K562 (cell line): ENCODE measurements at regions of chr2 and their contacts with region 1.

Region 1: DNA sequence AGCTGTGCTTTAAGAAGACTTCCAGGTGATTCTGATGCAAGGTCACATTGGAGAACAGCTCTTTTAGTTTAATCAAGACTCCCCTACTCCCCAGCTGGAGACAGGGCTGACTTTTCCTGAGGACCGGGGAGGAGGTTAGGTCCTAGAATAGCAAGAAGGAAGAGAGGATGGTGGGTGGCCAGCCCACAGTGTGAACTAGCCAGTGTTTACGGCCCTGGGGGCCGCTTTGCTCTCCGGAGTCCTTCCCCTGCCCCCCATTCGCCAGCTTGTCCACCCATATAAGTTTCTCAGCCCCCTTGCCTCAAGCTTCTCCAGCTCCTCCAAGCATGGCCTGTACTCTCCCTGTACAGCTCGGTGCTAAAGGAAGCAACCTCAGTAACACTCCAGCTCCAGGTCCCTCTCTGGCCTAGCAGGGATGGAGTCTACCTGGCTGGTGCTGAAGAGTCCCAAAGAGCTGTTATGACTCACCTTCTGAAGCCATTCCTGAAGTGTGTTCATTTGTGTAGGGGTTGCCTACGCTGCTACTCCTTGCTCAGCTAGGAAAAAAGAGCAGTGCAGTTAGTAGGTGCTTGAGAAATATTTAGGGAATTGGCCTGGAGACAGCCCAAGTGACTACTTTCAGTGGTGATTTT is 7.9 kb downstream of the INPP4A start:
- DNase-seq: no peak
- ATAC-seq: no peak
- H3K4me3 ChIP-seq: no peak overlapping the region
- H3K27ac ChIP-seq: no peak overlapping the region
- H3K4me1 ChIP-seq: peaks cover 3 to 28% of the 10 kb centered on the region in 2 experiments; a peak in 3 of 5 replicates
- H3K27me3 ChIP-seq: no peaks in the 10 kb centered on the region
- CTCF ChIP-seq: no peak
- EP300 ChIP-seq: no peak
- POLR2A ChIP-seq: no peak
- RAD21 ChIP-seq: no peak

Region 2: GRCh38 chr2:98465456-98466226 is 13.1 kb after region 1 on chr2:
- CTCF ChIA-PET with region 1: no interaction called
- POLR2A ChIA-PET with region 1: interaction called, 10 read pairs
- in situ Hi-C with region 1: no loop called
- intact Hi-C with region 1: no loop called
- DNase-seq: peak; percentile 47 to 86 (median 64)
- ATAC-seq: peak; percentile 86
- H3K4me3 ChIP-seq: no peak overlapping the region
- H3K27ac ChIP-seq: peak overlapping the region; percentile 23
- H3K4me1 ChIP-seq: peaks cover 37 to 38% of the 10 kb centered on the region in 2 experiments
- H3K27me3 ChIP-seq: no peaks in the 10 kb centered on the region
- CTCF ChIP-seq: no peak
- EP300 ChIP-seq: no peak
- POLR2A ChIP-seq: no peak
- RAD21 ChIP-seq: no peak